GM18951 (cell line): ENCODE measurements at regions of chr16 and their contacts with region 1.

Region 1: DNA sequence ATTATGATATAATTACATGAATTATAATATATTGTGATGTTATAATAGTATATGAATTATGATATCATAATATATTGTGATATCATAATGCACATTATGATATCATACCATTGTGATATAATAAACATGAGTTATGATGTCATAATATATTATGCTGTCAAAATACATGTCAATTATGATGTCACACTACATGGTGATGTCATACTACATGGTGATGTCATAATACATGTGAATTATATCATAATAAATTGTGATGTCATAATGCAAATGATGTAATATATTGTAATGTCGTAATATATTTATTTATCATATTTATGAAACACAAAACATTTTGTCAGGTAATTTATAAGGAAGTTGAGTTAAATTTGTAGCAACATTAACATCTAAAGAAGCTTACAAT is 1950.1 kb downstream of the TP53TG3F start:
- POLR2A ChIP-seq: no peak

Region 2: GRCh38 chr16:34598871-34599270 is 810.6 kb before region 1 on chr16:
- in situ Hi-C with region 1: loop called (anchors 25 kb)
- POLR2A ChIP-seq: no peak